ENCODE measurements at regions of chr20 and their contacts with region 1.

Region 1: GRCh38 chr20:44187051-44187762 is at the start of gene JPH2:
- DNase-seq: peak; percentile 92
- H3K4me3 ChIP-seq: peak within 1 kb of the TSS; percentile 49 to 80 (median 66)
- H3K27ac ChIP-seq: peak within 1 kb of the TSS; percentile 91 to 99 (median 95)
- H3K4me1 ChIP-seq: peaks cover 0 to 56% (median 39%) of the 10 kb centered on the region in 4 donors
- H3K27me3 ChIP-seq: peaks cover 0 to 5% (median 0%) of the 10 kb centered on the region in 3 donors
- CTCF ChIP-seq: no peak
- EP300 ChIP-seq: peak in 3 of 4 donors; percentile 82 to 91 (median 85)
- POLR2A ChIP-seq: peak; percentile 68 to 78
- total RNA-seq, gene JPH2: 52.0 to 166 (median 122) TPM

Region 2: GRCh38 chr20:44115762-44116644 is 71.2 kb before region 1 on chr20:
- intact Hi-C with region 1: loop called (anchors 1 kb)
- DNase-seq: no peak
- H3K4me3 ChIP-seq: no peak overlapping the region
- H3K27ac ChIP-seq: peak overlapping the region; percentile 74 to 82 (median 78)
- H3K4me1 ChIP-seq: peaks cover 0 to 90% (median 68%) of the 10 kb centered on the region in 4 donors
- H3K27me3 ChIP-seq: peaks cover 0 to 15% (median 0%) of the 10 kb centered on the region in 3 donors
- CTCF ChIP-seq: no peak
- EP300 ChIP-seq: no peak
- POLR2A ChIP-seq: no peak

Region 3: DNA sequence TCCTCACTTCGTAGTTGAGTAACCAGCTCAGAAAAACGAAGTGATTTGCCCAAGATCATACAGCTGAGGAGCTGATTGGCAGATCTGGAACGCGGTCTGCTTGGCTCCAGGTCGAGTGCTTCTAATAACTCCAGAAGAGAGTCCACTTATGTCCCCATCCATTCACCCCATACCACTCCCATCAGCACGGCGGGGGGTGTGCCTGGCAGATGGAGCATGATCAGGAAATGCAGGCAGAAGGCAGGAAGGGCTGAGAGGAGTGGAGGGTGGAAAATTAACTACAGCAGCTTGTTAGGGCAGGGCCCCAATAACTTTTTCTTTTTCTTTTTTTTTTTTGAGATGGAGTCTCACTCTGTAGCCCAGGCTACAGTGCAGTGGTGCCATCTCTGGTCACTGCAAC is 108.8 kb after region 1 on chr20:
- intact Hi-C with region 1: no loop called
- DNase-seq: peak; percentile 37
- H3K4me3 ChIP-seq: no peak overlapping the region
- H3K27ac ChIP-seq: no peak overlapping the region
- H3K4me1 ChIP-seq: peaks cover 0 to 3% (median 0%) of the 10 kb centered on the region in 4 donors
- H3K27me3 ChIP-seq: no peaks in the 10 kb centered on the region
- CTCF ChIP-seq: no peak
- EP300 ChIP-seq: no peak
- POLR2A ChIP-seq: no peak

Region 4: DNA sequence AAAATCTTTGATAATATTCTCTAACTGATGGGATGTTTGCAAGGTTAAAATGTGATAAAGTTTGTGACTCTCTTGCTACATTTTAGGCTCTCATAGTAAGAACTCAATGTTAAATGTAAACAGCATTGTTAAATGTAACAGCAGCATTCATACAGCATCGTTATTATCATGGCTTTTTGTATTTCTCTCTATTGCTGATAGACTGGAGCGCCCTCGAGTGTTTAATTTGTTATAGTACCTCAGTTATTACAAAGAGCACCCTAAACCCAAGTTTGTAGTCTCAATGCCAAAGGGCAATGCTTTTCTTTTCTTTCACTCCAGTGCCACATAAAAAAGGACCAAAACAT is 273.6 kb after region 1 on chr20:
- intact Hi-C with region 1: no loop called
- DNase-seq: no peak
- H3K4me3 ChIP-seq: no peak overlapping the region
- H3K27ac ChIP-seq: no peak overlapping the region
- H3K4me1 ChIP-seq: no peaks in the 10 kb centered on the region
- H3K27me3 ChIP-seq: no peaks in the 10 kb centered on the region
- CTCF ChIP-seq: no peak
- EP300 ChIP-seq: no peak
- POLR2A ChIP-seq: no peak

Region 5: GRCh38 chr20:45779011-45779915 is 1592.1 kb after region 1 on chr20:
- intact Hi-C with region 1: loop called (anchors 5 kb)
- DNase-seq: peak; percentile 98
- H3K4me3 ChIP-seq: no peak overlapping the region
- H3K27ac ChIP-seq: peak overlapping the region; percentile 89 to 94 (median 93)
- H3K4me1 ChIP-seq: peaks cover 0 to 75% (median 71%) of the 10 kb centered on the region in 4 donors
- H3K27me3 ChIP-seq: no peaks in the 10 kb centered on the region
- CTCF ChIP-seq: no peak
- EP300 ChIP-seq: peak; percentile 53 to 96 (median 92)
- POLR2A ChIP-seq: no peak

Measured in sigmoid colon (tissue), 7 donors.